Panc1 (cell line): ENCODE measurements at regions of chr16 and their contacts with region 1.

Region 1: DNA sequence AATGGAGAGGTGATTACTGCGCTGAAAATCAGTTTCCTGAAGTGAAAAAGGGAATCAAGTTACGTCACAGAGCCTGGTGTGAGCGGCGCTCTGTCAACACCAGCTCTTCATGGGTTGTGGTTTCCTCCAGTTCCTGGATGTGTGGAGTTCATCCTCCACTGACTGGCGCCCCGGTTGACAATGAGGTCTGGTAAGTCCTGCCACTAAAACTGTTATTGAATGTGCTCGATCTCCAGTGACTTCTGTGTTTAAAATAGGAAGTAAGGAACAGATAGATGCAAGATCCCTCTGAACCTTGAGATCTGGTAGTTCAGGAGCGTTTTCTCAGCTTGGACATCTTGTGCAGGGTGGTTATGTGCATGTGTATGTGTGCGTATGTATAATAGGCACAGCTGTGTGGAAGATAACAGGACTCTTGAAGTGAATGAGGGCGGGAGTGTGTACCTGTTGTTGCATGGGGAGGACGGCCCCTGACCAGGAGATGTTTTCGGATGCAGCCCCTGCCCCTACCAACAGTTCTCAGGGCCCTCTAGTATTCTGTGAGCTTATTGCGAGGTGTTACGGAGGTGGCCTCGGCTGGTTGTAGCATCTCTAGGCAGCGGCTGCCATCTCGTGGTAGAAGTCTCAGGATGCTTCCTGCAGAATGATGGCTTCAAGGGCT is 22.0 kb upstream of the GOT2 start:
- DNase-seq: peak; percentile 43
- ATAC-seq: peak; percentile 98
- H3K4me3 ChIP-seq: no peak overlapping the region
- H3K27ac ChIP-seq: no peak overlapping the region
- H3K4me1 ChIP-seq: no peaks in the 10 kb centered on the region
- H3K27me3 ChIP-seq: no peaks in the 10 kb centered on the region; the same call in 1 of the 2 replicates
- CTCF ChIP-seq: peak; percentile 84

Region 2: DNA sequence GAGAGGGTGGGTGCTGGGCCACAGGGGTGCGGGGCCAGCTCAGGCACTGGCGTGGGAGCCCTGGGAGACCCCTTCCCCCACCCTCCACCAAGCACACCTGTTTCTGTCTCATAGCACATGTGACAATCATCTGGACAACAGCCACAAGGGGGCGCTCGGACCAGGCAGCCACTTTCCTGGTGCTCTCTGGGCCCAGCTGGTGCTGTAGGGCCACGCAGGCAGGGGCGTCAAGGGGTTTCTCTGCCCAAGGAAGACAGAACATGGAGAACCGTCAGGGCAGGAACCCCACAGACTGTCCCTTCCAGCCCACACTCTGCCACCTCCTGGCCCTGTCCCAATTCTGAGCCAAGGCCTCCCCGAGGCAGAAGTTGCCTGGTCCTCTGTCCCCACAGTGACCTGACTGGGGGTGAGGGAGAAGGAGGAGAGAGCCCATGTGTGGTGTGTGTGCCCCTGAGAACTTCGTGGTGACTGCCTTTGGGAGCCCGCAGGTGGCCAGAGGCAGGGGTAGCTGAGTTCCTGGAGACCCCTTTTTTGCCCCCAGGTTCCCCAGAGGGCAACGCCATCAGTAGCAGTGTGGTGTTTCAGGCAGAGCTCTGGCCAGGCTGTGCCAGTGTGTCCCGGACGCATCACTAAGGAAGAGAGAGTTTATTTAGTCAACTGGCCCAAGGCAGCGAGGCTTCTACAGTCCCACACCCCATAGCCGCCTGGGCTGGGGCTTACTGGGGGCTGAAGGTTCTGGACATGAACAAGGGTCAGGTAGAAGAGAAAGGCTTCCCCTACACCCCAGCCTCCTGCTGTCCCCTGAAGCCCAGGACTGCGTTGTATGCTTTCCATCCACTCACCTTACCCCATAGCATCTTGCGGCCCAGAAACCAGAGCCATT is 243.9 kb before region 1 on chr16:
- CTCF ChIA-PET with region 1: interaction called, 3 read pairs
- POLR2A ChIA-PET with region 1: no interaction called
- in situ Hi-C with region 1: no loop called
- intact Hi-C with region 1: loop called (anchors 5 kb)
- DNase-seq: no peak
- ATAC-seq: peak; percentile 44
- H3K4me3 ChIP-seq: no peak overlapping the region
- H3K27ac ChIP-seq: no peak overlapping the region
- H3K4me1 ChIP-seq: peaks cover 6% of the 10 kb centered on the region; the same call in 1 of the 2 replicates
- H3K27me3 ChIP-seq: no peaks in the 10 kb centered on the region
- CTCF ChIP-seq: peak; percentile 90

Region 3: GRCh38 chr16:58661199-58661830 is 94.8 kb before region 1 on chr16:
- CTCF ChIA-PET with region 1: interaction called, 13 read pairs
- POLR2A ChIA-PET with region 1: no interaction called
- in situ Hi-C with region 1: no loop called
- intact Hi-C with region 1: no loop called
- DNase-seq: peak; percentile 65
- ATAC-seq: peak; percentile 95
- H3K4me3 ChIP-seq: no peak overlapping the region
- H3K27ac ChIP-seq: no peak overlapping the region
- H3K4me1 ChIP-seq: no peaks in the 10 kb centered on the region
- H3K27me3 ChIP-seq: no peaks in the 10 kb centered on the region
- CTCF ChIP-seq: peak; percentile 76

Region 4: DNA sequence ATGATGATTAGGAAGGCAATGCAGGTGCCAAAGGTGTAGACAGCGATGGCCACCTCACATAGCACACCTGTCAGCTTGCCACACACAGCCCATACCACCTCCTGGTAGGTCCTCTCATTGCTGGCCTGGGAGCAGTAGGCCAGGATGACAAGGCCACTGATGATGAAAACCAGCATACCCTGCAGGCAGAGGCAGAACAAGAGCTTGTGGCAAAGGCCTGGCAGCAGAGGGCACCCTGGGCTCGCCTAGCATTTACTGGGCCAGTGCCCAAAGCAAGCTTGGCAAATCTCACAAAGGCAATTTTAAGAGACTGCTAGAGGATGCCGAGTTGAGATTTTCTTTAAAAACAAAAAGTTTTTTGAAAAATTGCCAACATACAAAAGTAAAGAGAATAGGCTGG is 77.4 kb before region 1 on chr16:
- CTCF ChIA-PET with region 1: interaction called, 3 read pairs
- POLR2A ChIA-PET with region 1: no interaction called
- in situ Hi-C with region 1: no loop called
- intact Hi-C with region 1: loop called (anchors 5 kb)
- DNase-seq: no peak
- ATAC-seq: peak; percentile 54; the same call in 1 of the 2 replicates
- H3K4me3 ChIP-seq: no peak overlapping the region
- H3K27ac ChIP-seq: no peak overlapping the region
- H3K4me1 ChIP-seq: peaks cover 4% of the 10 kb centered on the region
- H3K27me3 ChIP-seq: no peaks in the 10 kb centered on the region
- CTCF ChIP-seq: no peak